Activated CD4-positive, alpha-beta T cell treated with anti-CD3 and anti-CD28 coated beads for 36 hours (primary cell): ENCODE measurements at regions of chr17 and their contacts with region 1.

Region 1: GRCh38 chr17:6657633-6658287 is 6.2 kb downstream of the C17orf100 start:
- DNase-seq: no peak
- ATAC-seq: no peak
- H3K4me3 Mint-ChIP-seq: peak overlapping the region; percentile 77
- H3K27ac Mint-ChIP-seq: peak overlapping the region; percentile 64
- H3K4me1 Mint-ChIP-seq: peaks cover 48% of the 10 kb centered on the region
- H3K27me3 Mint-ChIP-seq: peaks cover 2% of the 10 kb centered on the region

Region 2: GRCh38 chr17:6753006-6753445 is 95.3 kb after region 1 on chr17:
- CTCF ChIA-PET with region 1: no interaction called
- POLR2A ChIA-PET with region 1: no interaction called
- intact Hi-C with region 1: loop called in 1 of 2 experiments (anchors 2 kb)
- DNase-seq: peak; percentile 69
- ATAC-seq: peak; percentile 25
- H3K4me3 Mint-ChIP-seq: peak overlapping the region; percentile 3
- H3K27ac Mint-ChIP-seq: peak overlapping the region; percentile 91
- H3K4me1 Mint-ChIP-seq: peaks cover 48% of the 10 kb centered on the region
- H3K27me3 Mint-ChIP-seq: no peaks in the 10 kb centered on the region